ENCODE measurements at regions of chrX and their contacts with region 1.

Region 1: GRCh38 chrX:108105473-108105872 is 13.9 kb downstream of the ATG4A start:
- DNase-seq: no peak
- H3K4me3 ChIP-seq: no peak overlapping the region
- H3K27me3 ChIP-seq: no peaks in the 10 kb centered on the region
- CTCF ChIP-seq: no peak

Region 2: GRCh38 chrX:107619885-107620322 is 485.6 kb before region 1 on chrX:
- CTCF ChIA-PET with region 1: no interaction called
- POLR2A ChIA-PET with region 1: interaction called, 10 read pairs
- DNase-seq: no peak
- H3K4me3 ChIP-seq: no peak overlapping the region
- H3K27me3 ChIP-seq: no peaks in the 10 kb centered on the region
- CTCF ChIP-seq: no peak

Measured in BJ (cell line).